Activated CD4-positive, alpha-beta T cell treated with anti-CD3 and anti-CD28 coated beads for 36 hours (primary cell): ENCODE measurements at regions of chr10 and their contacts with region 1.

Region 1: DNA sequence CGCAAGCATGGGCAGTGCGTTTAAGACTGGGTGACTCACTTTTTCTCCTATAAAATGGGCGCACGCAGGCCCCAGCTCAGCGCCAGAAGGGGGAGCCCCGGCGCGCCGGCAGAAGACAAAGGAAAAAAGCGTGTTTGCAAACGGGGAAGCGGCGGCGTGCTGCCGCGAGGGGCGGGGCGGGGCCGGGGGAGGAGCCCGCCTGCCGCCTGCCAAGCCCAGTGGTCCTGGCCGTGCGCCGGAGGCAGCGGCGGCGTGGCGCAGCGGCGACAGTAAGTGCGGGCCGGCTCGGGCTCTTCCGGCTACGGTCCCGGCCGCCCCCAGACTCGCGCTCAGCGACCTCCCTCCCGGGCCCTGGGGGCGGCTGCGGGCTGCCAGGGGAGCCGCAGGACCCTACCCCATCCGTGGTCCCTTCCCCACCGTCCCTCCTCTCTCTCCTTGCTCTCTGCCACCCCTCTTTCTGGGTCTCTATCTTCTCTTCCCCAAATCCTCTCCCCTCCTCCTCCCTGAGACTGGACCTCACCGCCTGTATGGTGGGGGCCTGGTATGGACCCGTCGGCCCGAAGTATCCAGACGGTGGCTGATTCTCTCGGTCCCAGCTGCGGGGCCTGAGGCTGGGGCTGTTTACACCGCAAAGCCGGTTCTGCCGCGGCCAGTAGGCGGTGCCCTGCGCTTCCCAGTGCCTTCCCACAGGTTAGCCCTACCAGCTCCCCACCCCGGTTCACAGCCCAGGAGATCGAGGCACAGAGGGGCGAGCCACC is at the start of gene SLC29A3:
- DNase-seq: peak; percentile 94
- ATAC-seq: peak; percentile 87
- H3K4me3 Mint-ChIP-seq: peak within 1 kb of the TSS; percentile 85
- H3K27ac Mint-ChIP-seq: peak within 1 kb of the TSS; percentile 77
- H3K4me1 Mint-ChIP-seq: peaks cover 33% of the 10 kb centered on the region
- H3K27me3 Mint-ChIP-seq: no peaks in the 10 kb centered on the region
- total RNA-seq, gene SLC29A3: 2.4 to 2.6 TPM

Region 2: DNA sequence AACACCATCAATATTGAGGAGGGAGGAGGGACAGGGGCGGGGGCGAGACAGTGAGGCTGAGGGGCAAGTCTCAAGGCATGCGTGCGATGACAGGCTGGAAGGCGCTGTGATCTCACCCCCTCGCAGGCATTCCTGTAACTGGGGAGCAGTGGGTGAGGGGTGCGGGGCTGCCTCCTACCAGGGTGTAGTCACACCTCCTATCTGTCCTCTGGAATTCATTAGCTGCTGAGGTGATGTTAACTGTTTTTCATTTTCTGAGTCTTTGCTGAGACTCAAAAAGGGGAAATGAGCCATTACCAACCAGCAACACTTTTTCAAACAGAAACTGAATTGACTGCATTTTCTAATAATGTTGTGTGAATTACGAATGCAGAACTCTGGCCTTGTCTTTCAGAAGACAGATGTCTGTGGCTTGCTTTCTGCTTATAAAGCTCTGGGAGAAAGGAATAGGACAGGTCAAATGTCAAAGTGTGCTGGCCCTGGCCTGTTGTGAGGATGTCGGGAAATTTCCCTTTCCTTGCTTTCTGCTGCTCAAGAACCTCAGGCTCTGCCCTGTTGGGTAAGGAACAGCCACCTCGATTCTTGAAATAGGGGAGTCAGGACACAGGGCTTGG is 53.8 kb after region 1 on chr10:
- CTCF ChIA-PET with region 1: interaction called, 12 read pairs
- POLR2A ChIA-PET with region 1: no interaction called
- intact Hi-C with region 1: loop called (anchors 1 to 2 kb)
- DNase-seq: no peak
- ATAC-seq: no peak
- H3K4me3 Mint-ChIP-seq: no peak overlapping the region
- H3K27ac Mint-ChIP-seq: no peak overlapping the region
- H3K4me1 Mint-ChIP-seq: peaks cover 4% of the 10 kb centered on the region
- H3K27me3 Mint-ChIP-seq: peaks cover 2% of the 10 kb centered on the region

Region 3: GRCh38 chr10:71486484-71487114 is 167.4 kb after region 1 on chr10:
- CTCF ChIA-PET with region 1: no interaction called
- POLR2A ChIA-PET with region 1: no interaction called
- intact Hi-C with region 1: loop called in 1 of 2 experiments (anchors 5 kb)
- DNase-seq: peak; percentile 81
- ATAC-seq: peak; percentile 64
- H3K4me3 Mint-ChIP-seq: no peak overlapping the region
- H3K27ac Mint-ChIP-seq: no peak overlapping the region
- H3K4me1 Mint-ChIP-seq: no peaks in the 10 kb centered on the region
- H3K27me3 Mint-ChIP-seq: peaks cover 4% of the 10 kb centered on the region

Region 4: DNA sequence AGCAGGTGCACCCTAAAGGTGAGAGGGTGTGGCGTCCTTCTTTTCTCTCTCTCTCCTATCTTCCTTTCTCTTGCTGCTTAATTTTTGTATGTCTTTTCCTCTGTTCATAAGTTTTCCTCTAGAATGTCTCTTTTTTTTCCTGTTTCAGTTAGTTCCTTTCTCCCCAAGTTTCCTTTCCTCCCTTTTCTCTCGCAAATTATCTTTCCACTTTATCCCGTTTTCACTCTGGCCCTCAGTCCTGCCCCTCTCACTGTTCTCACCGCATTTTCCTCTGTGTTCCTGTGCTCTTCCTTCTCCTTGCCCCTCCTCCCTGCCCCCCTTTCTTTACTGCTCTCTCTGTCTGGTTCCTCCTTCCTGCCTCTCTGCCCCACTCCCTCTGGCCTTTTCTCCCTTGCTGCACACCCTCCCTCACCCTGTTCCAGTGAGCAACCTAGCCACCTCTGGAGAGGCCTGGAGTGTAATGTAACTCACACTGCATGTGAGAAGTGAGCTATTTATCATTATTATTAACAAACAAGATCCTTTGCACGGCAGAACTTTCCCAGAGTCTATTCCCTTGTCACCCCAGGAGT is 241.9 kb after region 1 on chr10:
- CTCF ChIA-PET with region 1: no interaction called
- POLR2A ChIA-PET with region 1: no interaction called
- intact Hi-C with region 1: no loop called
- DNase-seq: no peak
- ATAC-seq: no peak
- H3K4me3 Mint-ChIP-seq: no peak overlapping the region
- H3K27ac Mint-ChIP-seq: no peak overlapping the region
- H3K4me1 Mint-ChIP-seq: no peaks in the 10 kb centered on the region
- H3K27me3 Mint-ChIP-seq: peaks cover 14% of the 10 kb centered on the region

Region 5: DNA sequence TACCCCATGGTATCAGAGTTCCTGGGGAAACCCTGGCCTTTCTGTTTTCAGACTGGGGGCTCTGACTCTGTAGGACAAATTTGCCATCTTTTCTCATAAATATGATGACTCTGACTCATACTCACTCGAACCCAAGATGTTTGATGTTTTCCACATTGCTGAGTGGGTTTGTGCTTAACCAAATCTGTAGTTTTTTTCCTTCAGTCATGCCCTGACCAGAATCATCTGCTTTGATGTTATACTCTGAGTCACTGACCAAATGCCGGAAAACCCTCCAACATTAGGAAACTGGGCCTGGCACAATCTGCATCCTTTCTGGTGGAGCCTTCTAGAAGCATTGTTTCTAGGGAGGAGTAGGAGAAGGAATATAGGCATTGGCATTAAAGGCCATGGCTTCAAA is 281.6 kb after region 1 on chr10:
- CTCF ChIA-PET with region 1: no interaction called
- POLR2A ChIA-PET with region 1: no interaction called
- intact Hi-C with region 1: loop called (anchors 2 to 10 kb)
- DNase-seq: peak; percentile 19
- ATAC-seq: peak; percentile 64
- H3K4me3 Mint-ChIP-seq: no peak overlapping the region
- H3K27ac Mint-ChIP-seq: peak overlapping the region; percentile 65
- H3K4me1 Mint-ChIP-seq: peaks cover 14% of the 10 kb centered on the region
- H3K27me3 Mint-ChIP-seq: no peaks in the 10 kb centered on the region

Region 6: DNA sequence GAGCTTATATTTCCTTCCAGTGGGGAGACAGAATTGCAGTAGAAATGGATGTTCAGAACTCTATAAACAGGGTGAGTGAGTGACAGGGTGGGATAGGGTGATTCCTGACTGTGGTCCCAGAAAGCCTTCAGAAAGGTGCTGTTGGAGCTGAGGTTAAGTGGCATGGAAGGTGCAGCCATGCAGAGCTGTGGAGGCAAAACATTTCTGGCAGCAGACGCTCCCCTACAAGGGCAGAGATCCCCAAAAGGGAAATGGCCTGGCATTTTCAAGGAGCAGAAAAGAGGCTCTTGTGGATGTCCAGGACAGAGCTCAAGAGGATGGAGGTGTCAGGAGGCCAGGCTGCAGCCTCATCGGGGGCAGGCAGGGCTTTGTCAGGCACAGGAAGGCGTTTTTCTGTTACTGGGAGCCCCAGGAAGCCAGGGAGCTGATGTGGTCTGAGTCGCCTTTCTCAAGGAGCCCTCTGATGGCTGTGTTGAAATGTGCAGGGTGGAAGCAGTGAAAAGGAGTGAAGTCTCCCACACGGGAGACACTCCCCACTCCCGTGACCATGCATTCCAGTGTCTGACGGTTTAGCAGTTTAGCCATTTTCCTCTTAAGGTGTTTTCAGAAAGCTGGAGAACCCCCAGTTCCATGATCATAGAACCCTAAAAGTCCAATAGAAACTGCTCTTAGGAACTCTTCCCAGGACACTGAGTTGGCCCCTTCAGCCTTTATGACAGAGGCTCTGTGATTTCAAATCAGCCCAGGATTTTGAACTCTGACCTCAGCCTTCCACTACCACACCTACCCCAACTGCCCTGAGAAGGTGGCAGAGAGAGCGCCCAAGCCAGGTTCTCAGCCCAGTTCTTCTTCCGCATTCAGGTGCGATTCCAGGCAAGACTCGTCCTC is 304.1 kb after region 1 on chr10:
- CTCF ChIA-PET with region 1: no interaction called
- POLR2A ChIA-PET with region 1: no interaction called
- intact Hi-C with region 1: no loop called
- DNase-seq: no peak
- ATAC-seq: no peak
- H3K4me3 Mint-ChIP-seq: no peak overlapping the region
- H3K27ac Mint-ChIP-seq: no peak overlapping the region
- H3K4me1 Mint-ChIP-seq: no peaks in the 10 kb centered on the region
- H3K27me3 Mint-ChIP-seq: no peaks in the 10 kb centered on the region

Region 7: GRCh38 chr10:71812016-71812912 is 493.0 kb after region 1 on chr10:
- CTCF ChIA-PET with region 1: no interaction called
- POLR2A ChIA-PET with region 1: no interaction called
- intact Hi-C with region 1: loop called (anchors 1 to 5 kb)
- DNase-seq: peak; percentile 88
- ATAC-seq: peak; percentile 98
- H3K4me3 Mint-ChIP-seq: no peak overlapping the region
- H3K27ac Mint-ChIP-seq: no peak overlapping the region
- H3K4me1 Mint-ChIP-seq: peaks cover 2% of the 10 kb centered on the region
- H3K27me3 Mint-ChIP-seq: no peaks in the 10 kb centered on the region

Region 8: DNA sequence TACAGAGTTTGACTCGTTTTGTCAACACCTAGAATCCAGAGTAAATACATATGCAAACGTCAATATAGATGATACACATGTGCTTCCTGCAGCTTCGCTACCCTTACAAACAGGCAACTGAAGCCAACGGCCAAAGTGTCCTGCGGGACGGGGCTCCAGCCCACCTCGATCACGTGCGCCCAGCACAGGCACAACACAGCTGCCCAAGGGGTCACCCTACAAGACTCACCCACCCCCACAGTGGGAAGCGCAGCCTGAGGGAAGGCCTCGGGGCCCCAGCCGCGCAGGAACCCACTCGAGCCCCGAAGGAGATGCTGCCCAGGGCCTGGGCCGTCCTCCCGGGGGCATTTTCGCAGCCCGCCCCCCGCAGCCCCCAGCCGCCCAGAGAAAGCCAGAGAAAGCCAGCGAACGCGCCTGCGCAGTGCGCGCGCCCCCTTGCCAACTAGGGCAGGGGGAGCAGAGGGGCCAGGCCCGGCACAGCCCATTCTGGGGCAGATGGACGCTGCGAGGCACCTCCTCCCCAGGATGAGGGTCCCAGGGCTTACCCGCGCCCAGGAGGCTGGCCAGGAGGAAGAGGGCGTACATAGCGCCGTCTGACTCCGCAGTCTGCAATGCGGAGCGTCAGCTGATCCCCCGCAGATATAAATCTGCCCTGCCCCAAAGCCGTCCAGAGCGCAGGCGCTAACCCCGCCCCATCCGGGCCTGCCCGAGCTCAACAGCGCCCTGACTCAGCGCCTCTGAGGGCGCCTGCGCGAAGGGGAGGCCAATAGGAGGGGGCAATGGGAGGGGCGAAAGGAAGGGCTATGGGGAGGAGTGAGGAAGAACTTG is 531.6 kb after region 1 on chr10 and contains the start of gene PSAP:
- CTCF ChIA-PET with region 1: interaction called, 3 read pairs
- POLR2A ChIA-PET with region 1: no interaction called
- intact Hi-C with region 1: loop called in 1 of 2 experiments (anchors 1 kb)
- DNase-seq: peak; percentile 99
- ATAC-seq: peak; percentile 99
- H3K4me3 Mint-ChIP-seq: peak within 1 kb of the TSS; percentile 90
- H3K27ac Mint-ChIP-seq: peak within 1 kb of the TSS; percentile 72
- H3K4me1 Mint-ChIP-seq: peaks cover 47% of the 10 kb centered on the region
- H3K27me3 Mint-ChIP-seq: no peaks in the 10 kb centered on the region
- total RNA-seq, gene PSAP: 100 to 109 TPM